ENCODE measurements at regions of chr2 and their contacts with region 1.

Region 1: GRCh38 chr2:39227628-39228412 is 15.9 kb downstream of the CDKL4 start:
- DNase-seq: peak; percentile 92
- ATAC-seq: peak; percentile 82
- H3K4me3 Mint-ChIP-seq: peak overlapping the region; percentile 61
- H3K27ac Mint-ChIP-seq: peak overlapping the region; percentile 97
- H3K4me1 Mint-ChIP-seq: peaks cover 57% of the 10 kb centered on the region
- H3K27me3 Mint-ChIP-seq: no peaks in the 10 kb centered on the region

Region 2: DNA sequence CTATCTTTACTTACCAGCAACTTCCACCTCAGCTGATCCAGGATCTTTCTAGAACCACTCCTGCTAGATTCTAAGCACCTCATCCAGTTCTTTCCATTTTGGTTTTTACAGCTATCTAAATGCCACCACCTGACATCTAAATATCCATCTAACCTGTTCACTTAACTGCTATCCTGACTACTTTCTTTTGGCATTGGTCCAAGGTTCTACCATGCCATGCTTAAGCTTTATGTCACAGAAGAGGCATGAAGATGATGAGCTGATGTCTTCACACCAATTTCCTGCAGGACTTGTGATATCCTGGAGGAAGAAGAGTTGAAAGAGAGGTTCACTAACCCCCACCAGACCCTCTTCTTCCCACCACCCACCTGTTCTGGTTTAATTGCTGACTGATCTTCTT is 272.8 kb before region 1 on chr2:
- CTCF ChIA-PET with region 1: interaction called, 207 read pairs
- POLR2A ChIA-PET with region 1: no interaction called
- DNase-seq: no peak
- ATAC-seq: no peak
- H3K4me3 Mint-ChIP-seq: no peak overlapping the region
- H3K27ac Mint-ChIP-seq: no peak overlapping the region
- H3K4me1 Mint-ChIP-seq: peaks cover 2% of the 10 kb centered on the region
- H3K27me3 Mint-ChIP-seq: peaks cover 40% of the 10 kb centered on the region

Region 3: DNA sequence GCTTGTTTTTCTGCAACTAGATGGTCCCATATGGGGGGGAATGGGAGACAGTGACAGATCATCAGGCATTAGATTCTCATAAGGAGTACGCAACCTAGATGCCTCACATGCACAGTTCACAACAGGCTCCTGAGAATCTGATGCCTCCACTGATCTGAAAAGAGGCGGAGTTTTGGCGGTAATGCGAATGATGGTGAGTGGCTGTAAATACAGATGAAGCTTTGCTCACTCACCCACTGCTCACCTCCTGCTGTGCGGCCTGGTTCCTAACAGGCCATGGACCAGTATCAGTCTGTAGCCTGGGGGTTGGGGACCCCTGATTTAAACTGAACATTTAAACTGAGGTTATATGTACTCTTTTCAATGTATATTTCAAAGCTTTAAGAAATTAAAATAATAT is 147.7 kb before region 1 on chr2:
- CTCF ChIA-PET with region 1: interaction called, 16 read pairs
- POLR2A ChIA-PET with region 1: interaction called, 5 read pairs
- DNase-seq: no peak
- ATAC-seq: no peak
- H3K4me3 Mint-ChIP-seq: no peak overlapping the region
- H3K27ac Mint-ChIP-seq: no peak overlapping the region
- H3K4me1 Mint-ChIP-seq: peaks cover 42% of the 10 kb centered on the region
- H3K27me3 Mint-ChIP-seq: no peaks in the 10 kb centered on the region

Region 4: DNA sequence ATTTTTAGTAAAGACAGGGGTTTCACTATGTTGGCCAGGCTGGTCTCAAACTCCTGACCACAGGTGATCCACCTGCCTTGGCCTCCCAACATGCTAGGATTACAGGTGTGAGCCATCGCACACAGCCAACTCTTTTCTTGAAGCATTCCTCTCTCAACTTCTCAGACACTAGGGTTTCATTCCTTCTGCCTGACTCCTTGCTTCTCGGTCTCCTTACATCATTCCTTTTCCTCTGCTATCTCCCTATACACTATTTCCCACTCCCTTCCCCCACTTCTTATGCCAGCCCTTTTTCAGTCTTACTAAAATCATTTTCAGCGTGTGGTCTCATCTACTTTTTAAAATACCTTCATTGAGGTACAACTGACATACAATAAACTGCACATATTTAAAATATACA is 113.0 kb before region 1 on chr2:
- CTCF ChIA-PET with region 1: interaction called, 213 read pairs
- POLR2A ChIA-PET with region 1: interaction called, 315 read pairs
- DNase-seq: no peak
- ATAC-seq: no peak
- H3K4me3 Mint-ChIP-seq: peak overlapping the region; percentile 80
- H3K27ac Mint-ChIP-seq: peak overlapping the region; percentile 66
- H3K4me1 Mint-ChIP-seq: peaks cover 67% of the 10 kb centered on the region
- H3K27me3 Mint-ChIP-seq: no peaks in the 10 kb centered on the region

Region 5: GRCh38 chr2:39216346-39217191 is 11.3 kb before region 1 on chr2:
- CTCF ChIA-PET with region 1: interaction called, 47 read pairs
- POLR2A ChIA-PET with region 1: interaction called, 15 read pairs
- DNase-seq: peak; percentile 96
- ATAC-seq: peak; percentile 90
- H3K4me3 Mint-ChIP-seq: peak overlapping the region; percentile 57
- H3K27ac Mint-ChIP-seq: peak overlapping the region; percentile 97
- H3K4me1 Mint-ChIP-seq: peaks cover 76% of the 10 kb centered on the region
- H3K27me3 Mint-ChIP-seq: no peaks in the 10 kb centered on the region